Ascending aorta (tissue), 2 donors: ENCODE measurements at regions of chr3 and their contacts with region 1.

Region 1: GRCh38 chr3:107651782-107652181 is 129.0 kb downstream of the BBX start:
- DNase-seq: no peak
- H3K4me3 ChIP-seq: no peak overlapping the region
- H3K27ac ChIP-seq: no peak overlapping the region
- H3K4me1 ChIP-seq: peaks cover 0 to 3% of the 10 kb centered on the region in 2 donors
- H3K27me3 ChIP-seq: no peaks in the 10 kb centered on the region
- CTCF ChIP-seq: no peak

Region 2: GRCh38 chr3:107574650-107575049 is 77.1 kb before region 1 on chr3:
- intact Hi-C with region 1: loop called (anchors 10 kb)
- DNase-seq: no peak
- H3K4me3 ChIP-seq: no peak overlapping the region
- H3K27ac ChIP-seq: no peak overlapping the region
- H3K4me1 ChIP-seq: peaks cover 0 to 3% of the 10 kb centered on the region in 2 donors
- H3K27me3 ChIP-seq: no peaks in the 10 kb centered on the region
- CTCF ChIP-seq: peak; percentile 11 to 64 (median 50)